ENCODE measurements at regions of chr12 and their contacts with region 1.

Region 1: GRCh38 chr12:101773650-101774162 is 34.4 kb upstream of the SYCP3 start:
- DNase-seq: peak; percentile 57
- H3K4me3 ChIP-seq: no peak overlapping the region
- H3K27ac ChIP-seq: no peak overlapping the region
- H3K4me1 ChIP-seq: no peaks in the 10 kb centered on the region
- H3K27me3 ChIP-seq: no peaks in the 10 kb centered on the region
- CTCF ChIP-seq: peak; percentile 83 to 96

Region 2: GRCh38 chr12:101407436-101408345 is 366.0 kb before region 1 on chr12 and contains the start of gene ARL1:
- CTCF ChIA-PET with region 1: no interaction called
- dilution Hi-C with region 1: no loop called
- in situ Hi-C with region 1: loop called (anchors 10 to 25 kb)
- intact Hi-C with region 1: no loop called
- DNase-seq: peak; percentile 88
- H3K4me3 ChIP-seq: peak within 1 kb of the TSS; percentile 72 to 99 (median 88)
- H3K27ac ChIP-seq: peak within 1 kb of the TSS; percentile 98
- H3K4me1 ChIP-seq: peaks cover 24% of the 10 kb centered on the region
- H3K27me3 ChIP-seq: no peaks in the 10 kb centered on the region
- CTCF ChIP-seq: no peak
- total RNA-seq, gene ARL1: 64.0 to 93.5 TPM

Region 3: GRCh38 chr12:101414533-101415119 is 359.1 kb before region 1 on chr12:
- CTCF ChIA-PET with region 1: no interaction called
- dilution Hi-C with region 1: no loop called
- in situ Hi-C with region 1: loop called (anchors 10 to 25 kb)
- intact Hi-C with region 1: loop called (anchors 1 kb)
- DNase-seq: peak; percentile 42
- H3K4me3 ChIP-seq: no peak overlapping the region
- H3K27ac ChIP-seq: no peak overlapping the region
- H3K4me1 ChIP-seq: peaks cover 3% of the 10 kb centered on the region
- H3K27me3 ChIP-seq: no peaks in the 10 kb centered on the region
- CTCF ChIP-seq: peak; percentile 25 to 56

Region 4: DNA sequence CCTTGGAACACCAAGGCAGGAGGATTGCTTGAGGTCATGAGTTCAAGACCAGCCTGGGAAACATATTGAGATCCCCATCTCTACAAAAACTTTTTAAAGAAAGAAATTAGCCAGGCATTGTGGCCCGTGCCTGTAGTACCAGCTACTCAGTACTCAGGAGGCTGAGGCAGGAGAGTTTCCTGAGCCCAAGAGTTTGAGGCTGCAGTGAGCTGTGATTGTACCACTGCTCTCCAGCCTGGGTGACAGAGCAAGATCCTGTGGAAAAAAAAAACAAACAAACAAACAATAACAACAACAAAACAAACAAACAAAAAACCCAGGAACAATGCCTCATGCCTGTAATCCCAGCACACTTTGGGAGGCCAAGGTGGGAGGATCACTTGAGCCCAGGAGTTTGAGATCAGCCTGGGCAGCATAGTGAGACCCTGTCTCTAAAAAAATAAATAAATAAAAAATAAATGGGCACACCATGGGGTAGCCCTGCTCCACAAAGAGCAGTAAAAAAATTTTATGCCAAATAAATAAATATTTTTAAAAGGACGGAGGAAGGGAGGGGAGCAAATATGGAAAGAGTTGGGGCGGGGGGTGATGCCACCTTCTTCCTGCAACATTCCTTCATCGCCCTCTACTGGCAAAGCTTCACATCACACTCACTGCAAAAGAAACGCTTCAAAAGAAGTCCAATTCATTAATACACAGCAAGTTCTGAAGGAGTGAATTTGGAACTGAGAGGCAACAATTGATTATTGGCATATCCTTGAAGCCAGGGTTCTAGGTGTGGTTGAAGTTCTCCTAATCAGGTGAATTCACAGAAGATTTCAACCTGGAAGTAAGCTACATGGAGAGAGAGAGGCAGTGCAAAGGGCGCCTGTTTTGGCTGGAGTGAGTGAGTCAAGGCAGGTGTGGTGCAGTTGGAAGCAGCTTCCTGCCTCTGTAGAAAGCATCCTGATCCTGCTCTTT is 65.9 kb after region 1 on chr12:
- CTCF ChIA-PET with region 1: interaction called, 6 read pairs
- dilution Hi-C with region 1: no loop called
- in situ Hi-C with region 1: no loop called
- intact Hi-C with region 1: loop called (anchors 1 kb)
- DNase-seq: peak; percentile 71
- H3K4me3 ChIP-seq: no peak overlapping the region
- H3K27ac ChIP-seq: no peak overlapping the region
- H3K4me1 ChIP-seq: peaks cover 7% of the 10 kb centered on the region
- H3K27me3 ChIP-seq: no peaks in the 10 kb centered on the region
- CTCF ChIP-seq: peak; percentile 78 to 86

Region 5: DNA sequence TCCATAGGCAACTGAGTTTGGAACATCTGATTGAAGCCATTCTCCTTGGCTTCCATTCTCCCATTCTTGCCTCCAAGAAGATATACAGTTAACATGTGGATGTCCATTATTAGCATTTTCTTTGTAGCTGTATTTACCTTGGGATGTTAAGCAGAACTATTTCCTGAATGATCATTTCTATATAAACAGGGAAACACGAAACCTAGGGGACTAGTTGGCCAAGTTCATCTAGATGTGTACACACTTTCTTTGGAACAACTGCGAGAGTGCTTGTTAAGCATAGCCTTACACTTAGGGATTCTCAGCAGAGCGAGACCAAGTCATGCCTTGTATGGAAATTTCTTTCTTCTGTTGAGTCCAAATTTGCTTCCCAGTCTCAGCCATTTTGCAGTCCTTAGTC is 145.7 kb after region 1 on chr12:
- CTCF ChIA-PET with region 1: no interaction called
- dilution Hi-C with region 1: no loop called
- in situ Hi-C with region 1: no loop called
- intact Hi-C with region 1: loop called (anchors 2 kb)
- DNase-seq: no peak
- H3K4me3 ChIP-seq: no peak overlapping the region
- H3K27ac ChIP-seq: no peak overlapping the region
- H3K4me1 ChIP-seq: no peaks in the 10 kb centered on the region
- H3K27me3 ChIP-seq: no peaks in the 10 kb centered on the region
- CTCF ChIP-seq: no peak

Region 6: GRCh38 chr12:101962486-101962885 is 188.8 kb after region 1 on chr12:
- CTCF ChIA-PET with region 1: no interaction called
- dilution Hi-C with region 1: no loop called
- in situ Hi-C with region 1: no loop called
- intact Hi-C with region 1: no loop called
- DNase-seq: peak; percentile 41
- H3K4me3 ChIP-seq: no peak overlapping the region
- H3K27ac ChIP-seq: no peak overlapping the region
- H3K4me1 ChIP-seq: no peaks in the 10 kb centered on the region
- H3K27me3 ChIP-seq: no peaks in the 10 kb centered on the region
- CTCF ChIP-seq: no peak

Measured in mammary epithelial cell (primary cell).